ENCODE measurements at regions of chr3 and their contacts with region 1.

Region 1: DNA sequence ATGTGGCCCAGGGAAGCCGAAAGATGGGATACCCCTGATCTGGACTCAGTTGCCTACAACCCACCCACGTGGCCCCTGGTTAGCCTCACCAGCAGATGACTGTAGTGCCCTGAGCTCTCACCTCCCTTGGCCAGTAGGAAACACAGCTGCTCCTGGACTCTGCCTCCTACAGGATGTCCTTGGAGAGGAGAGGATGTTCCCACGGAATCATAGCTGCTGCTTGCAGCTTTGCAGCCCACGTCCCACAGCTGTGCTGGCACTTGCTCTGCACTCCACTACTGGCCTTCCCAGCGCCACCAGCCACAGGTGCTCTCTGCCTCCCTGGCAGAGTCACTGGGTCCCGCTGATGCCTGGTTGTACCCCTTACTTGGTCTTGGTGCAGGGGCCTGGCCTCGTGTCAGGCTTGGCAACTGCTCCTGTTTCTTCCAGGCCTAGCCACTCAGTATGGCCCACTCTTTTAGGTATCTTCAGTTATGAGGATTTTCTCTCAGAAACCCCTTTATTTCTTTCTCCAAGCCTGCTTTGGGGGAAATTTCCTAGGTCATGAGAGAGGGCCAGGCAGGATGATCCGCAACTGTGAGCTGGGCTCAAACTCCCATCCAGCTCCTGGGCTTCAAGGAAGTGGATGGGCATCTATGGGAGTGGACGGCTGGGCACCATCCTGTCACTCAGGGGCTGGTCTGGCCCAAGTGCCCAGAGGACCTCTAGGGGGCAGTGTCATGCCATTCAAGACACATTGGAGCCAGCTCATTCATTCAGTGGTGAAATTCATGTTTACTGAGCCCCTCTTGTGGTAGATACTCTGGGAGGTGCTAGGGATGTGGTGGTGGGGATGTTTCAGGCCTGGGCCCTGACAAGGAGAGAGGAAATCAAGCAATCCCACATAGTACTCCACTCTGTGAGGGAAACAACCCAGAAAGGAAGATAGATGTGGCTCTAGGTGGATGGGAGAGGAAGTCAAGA is 16.2 kb upstream of the VILL start:
- DNase-seq: peak; percentile 74
- ATAC-seq: peak; percentile 99
- H3K4me3 ChIP-seq: no peak overlapping the region
- H3K27ac ChIP-seq: no peak overlapping the region
- H3K4me1 ChIP-seq: no peaks in the 10 kb centered on the region
- H3K27me3 ChIP-seq: no peaks in the 10 kb centered on the region
- CTCF ChIP-seq: peak; percentile 98

Region 2: DNA sequence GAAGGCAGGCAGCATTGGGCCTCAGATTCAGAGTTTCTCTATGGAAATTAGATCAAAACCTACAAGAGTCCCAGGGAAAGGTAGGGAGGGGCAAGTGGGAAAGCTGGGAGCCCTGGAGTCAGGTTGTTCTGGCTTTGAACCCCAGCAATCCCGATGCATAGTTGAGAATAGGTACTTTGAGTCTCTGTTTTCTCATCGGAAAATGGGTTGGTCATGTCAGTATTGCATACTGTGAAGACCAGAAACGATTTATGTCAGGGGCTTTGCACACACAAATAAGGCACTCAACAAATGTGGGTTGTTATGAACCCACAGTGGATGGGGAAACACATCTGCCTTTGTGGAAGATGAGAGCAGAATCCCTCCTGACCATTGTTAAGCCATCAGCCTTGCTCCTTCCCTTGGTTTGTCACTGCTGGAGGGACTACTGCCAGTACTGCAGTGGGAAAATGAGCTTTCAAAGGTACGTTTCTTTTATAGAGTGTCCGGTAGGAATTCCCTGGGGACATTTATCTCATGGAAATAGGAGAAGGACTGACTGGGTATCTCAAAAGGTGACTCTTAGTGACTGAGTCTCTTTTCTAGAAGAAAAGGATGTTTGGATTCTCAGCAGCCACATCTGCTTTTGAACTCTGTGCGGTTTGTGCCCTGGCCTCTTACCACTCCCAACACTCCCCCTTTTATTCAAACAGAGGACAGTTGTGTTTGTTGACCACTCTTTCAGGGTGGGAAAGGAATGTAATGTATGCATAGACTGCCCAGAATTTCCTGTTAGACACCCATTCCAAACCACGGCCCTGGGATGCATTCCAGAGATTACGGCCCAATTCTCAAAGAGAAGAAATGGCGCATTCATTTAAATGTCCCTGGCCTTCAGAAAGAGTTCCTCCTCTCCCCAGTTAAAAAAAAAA is 38.4 kb before region 1 on chr3:
- CTCF ChIA-PET with region 1: no interaction called
- POLR2A ChIA-PET with region 1: no interaction called
- intact Hi-C with region 1: no loop called
- DNase-seq: peak; percentile 94
- ATAC-seq: peak; percentile 92
- H3K4me3 ChIP-seq: no peak overlapping the region
- H3K27ac ChIP-seq: peak overlapping the region; percentile 63
- H3K4me1 ChIP-seq: peaks cover 27% of the 10 kb centered on the region
- H3K27me3 ChIP-seq: no peaks in the 10 kb centered on the region
- CTCF ChIP-seq: no peak

Region 3: DNA sequence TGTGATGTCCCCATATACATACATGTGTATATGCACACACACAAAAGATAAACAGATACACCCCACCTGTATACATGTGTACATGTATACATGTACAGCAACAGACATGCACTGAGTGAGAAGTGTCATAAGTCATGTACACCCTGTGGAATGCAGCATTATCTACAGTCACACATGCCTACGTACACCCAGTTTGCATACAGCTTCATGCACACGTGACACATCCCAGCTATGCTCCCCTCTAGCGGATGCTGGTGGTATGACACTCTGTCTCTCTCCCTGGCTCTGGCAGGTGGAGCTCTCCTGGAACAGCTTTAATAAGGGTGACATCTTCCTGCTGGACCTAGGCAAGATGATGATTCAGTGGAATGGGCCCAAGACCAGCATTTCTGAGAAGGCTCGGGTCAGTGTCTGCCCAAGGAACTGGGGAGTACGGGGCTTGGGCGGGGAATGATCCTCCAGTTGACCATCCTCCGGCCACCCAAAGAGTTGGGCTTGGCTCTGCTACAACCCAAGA is 22.4 kb after region 1 on chr3:
- CTCF ChIA-PET with region 1: interaction called, 35 read pairs
- POLR2A ChIA-PET with region 1: no interaction called
- intact Hi-C with region 1: loop called (anchors 1 kb)
- DNase-seq: peak; percentile 96
- ATAC-seq: peak; percentile 62
- H3K4me3 ChIP-seq: no peak overlapping the region
- H3K27ac ChIP-seq: no peak overlapping the region
- H3K4me1 ChIP-seq: peaks cover 21% of the 10 kb centered on the region
- H3K27me3 ChIP-seq: no peaks in the 10 kb centered on the region
- CTCF ChIP-seq: peak; percentile 93

Region 4: GRCh38 chr3:38270616-38271015 is 296.2 kb after region 1 on chr3:
- CTCF ChIA-PET with region 1: no interaction called
- POLR2A ChIA-PET with region 1: no interaction called
- intact Hi-C with region 1: no loop called
- DNase-seq: no peak
- ATAC-seq: no peak
- H3K4me3 ChIP-seq: no peak overlapping the region
- H3K27ac ChIP-seq: no peak overlapping the region
- H3K4me1 ChIP-seq: no peaks in the 10 kb centered on the region
- H3K27me3 ChIP-seq: no peaks in the 10 kb centered on the region
- CTCF ChIP-seq: no peak